ENCODE measurements at regions of chr19 and their contacts with region 1.

Region 1: DNA sequence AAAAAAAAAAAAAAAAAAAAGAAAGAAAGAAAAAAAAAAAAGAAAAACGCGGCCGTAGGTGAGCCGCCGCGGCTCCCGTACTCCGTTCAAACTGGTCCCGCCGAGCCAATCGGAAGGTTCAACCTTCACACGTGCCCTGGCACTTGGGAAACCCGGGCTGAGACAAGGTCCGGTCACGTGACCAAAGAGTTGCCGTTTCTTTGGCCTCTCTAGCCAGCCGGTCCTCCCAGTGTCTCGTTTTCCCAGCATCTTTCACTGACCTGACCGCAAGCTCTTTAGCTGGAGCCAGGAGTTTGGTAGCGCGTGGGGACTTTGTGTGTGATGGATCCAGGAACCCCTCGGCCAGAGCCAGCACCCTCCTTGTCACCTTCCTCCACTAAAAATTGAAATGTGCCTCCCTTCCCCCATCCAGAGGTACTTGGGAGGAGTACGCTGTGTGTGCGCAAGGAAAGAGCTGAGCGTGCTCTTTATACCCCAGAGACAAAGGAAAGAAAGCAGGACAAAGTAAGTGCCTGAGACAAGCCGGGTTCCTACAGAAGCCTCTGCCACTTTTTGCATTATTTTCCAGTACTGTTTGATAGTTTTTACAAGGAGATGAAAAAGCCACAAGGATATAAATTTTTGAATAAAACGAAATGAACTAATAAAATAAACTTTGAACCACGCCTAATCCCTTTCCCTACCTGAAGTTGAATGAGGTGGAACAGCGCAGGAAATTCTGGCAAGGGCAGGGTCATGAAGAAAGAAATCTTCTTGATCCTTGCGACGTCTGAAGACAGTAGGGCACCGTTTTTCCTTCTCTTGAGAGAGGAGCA is 959 bp downstream of the TNPO2 start:
- DNase-seq: peak; percentile 91
- H3K4me3 Mint-ChIP-seq: peak overlapping the region; percentile 99
- H3K27ac Mint-ChIP-seq: peak overlapping the region; percentile 98
- H3K4me1 Mint-ChIP-seq: peaks cover 48% of the 10 kb centered on the region
- H3K27me3 Mint-ChIP-seq: no peaks in the 10 kb centered on the region

Region 2: DNA sequence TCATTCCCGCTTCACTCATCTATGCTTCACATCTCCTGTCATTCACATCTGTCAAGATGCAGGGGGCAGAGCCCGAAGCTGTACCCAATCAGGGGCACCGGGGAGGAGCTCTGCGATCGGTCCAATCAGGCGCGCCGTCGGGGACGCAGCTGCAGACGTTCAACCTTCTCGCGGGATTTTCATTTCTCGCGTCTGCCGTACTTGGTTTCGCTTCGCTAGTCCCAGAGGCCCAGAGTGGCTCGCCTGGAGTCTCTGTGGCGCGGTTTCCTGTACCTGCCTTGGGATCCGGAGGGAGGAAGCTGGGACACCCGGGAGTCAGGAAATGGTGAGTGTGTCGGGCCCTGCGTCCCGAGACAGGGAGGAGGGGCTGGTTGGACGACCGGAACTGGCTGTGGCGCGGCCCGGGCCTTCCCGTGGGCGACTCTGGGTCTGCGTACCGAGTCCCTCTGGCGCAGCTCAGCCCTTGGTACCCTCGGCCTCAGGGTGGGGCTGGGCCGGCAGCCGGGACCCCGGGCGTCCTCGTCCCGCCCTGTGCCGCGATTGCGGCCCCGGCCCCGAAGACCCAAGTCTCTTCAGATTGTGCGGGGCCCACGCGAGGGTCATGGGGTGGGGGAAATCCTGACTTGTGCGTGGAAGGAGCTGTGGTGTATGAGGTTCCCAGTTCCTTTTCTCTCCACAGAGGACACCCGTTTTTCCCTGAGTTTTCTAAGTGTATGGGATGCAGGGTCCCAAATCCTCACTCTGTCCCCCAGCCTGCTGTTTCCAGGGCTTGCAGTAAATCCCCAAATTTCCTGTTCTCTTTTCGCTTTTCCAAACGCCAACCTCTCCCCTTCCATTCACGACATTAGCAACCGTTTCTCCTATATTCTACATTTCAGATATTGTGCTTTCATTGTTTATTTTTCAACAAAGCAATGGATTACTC is 559.6 kb before region 1 on chr19 and contains the start of gene ZNF136:
- intact Hi-C with region 1: no loop called
- DNase-seq: peak; percentile 90
- H3K4me3 Mint-ChIP-seq: peak within 1 kb of the TSS; percentile 94
- H3K27ac Mint-ChIP-seq: peak within 1 kb of the TSS; percentile 93
- H3K4me1 Mint-ChIP-seq: peaks cover 28% of the 10 kb centered on the region
- H3K27me3 Mint-ChIP-seq: no peaks in the 10 kb centered on the region
- total RNA-seq, gene ZNF136: 10.1 and 10.8 TPM in 2 replicates

Region 3: DNA sequence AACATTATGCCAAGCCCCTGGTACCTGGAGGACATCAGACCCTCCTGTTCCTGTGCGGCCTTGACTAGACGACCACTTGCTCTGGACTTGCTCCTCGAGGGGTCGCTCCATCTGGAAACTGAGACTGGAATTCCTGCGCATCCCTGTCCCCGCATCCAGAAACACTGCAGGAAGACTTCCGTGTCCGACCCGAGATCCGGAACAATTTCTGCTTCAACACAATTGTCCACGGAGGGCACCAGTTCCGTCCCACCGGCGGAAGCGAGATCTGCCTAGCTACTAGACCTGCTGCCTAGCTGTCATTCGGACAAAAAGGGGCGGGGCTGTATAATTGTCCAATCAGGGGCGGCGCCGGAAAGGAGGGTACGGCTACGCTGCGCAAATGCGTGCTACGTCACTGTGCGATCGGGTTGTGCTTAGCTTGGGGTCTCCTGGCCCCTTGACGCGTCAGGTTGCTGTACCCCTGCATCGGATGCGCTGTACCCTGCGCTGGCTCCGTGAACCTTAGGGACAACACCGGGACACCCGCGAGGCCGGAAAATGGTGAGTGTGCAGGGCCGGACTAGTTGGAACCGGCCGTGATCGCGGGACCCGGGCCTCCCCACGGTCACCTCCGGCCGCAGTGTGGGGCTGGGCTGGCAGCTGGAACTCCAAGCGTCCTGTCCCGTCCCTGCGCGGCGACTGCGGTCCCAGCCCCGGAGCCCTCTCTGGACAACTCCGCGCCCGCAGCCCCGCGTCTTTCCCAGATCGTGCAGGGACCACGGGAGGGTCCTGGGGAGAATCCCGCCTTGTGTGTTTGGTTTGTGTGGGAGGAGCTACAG is 112.0 kb before region 1 on chr19 and contains the starts of genes ZNF490 and ZNF791:
- intact Hi-C with region 1: loop called (anchors 5 kb)
- DNase-seq: peak; percentile 96
- H3K4me3 Mint-ChIP-seq: peak within 1 kb of the TSS; percentile 100
- H3K27ac Mint-ChIP-seq: peak within 1 kb of the TSS; percentile 99
- H3K4me1 Mint-ChIP-seq: peaks cover 22% of the 10 kb centered on the region
- H3K27me3 Mint-ChIP-seq: no peaks in the 10 kb centered on the region
- total RNA-seq, gene ZNF490: 9.2 and 9.4 TPM in 2 replicates
- total RNA-seq, gene ZNF791: 23.5 and 29.0 TPM in 2 replicates

Region 4: GRCh38 chr19:12681074-12681951 is 41.5 kb before region 1 on chr19 and contains the start of gene DHPS:
- intact Hi-C with region 1: loop called (anchors 1 kb)
- DNase-seq: peak; percentile 89
- H3K4me3 Mint-ChIP-seq: peak within 1 kb of the TSS; percentile 86
- H3K27ac Mint-ChIP-seq: peak within 1 kb of the TSS; percentile 88
- H3K4me1 Mint-ChIP-seq: peaks cover 12% of the 10 kb centered on the region
- H3K27me3 Mint-ChIP-seq: no peaks in the 10 kb centered on the region
- total RNA-seq, gene DHPS: 144 and 147 TPM in 2 replicates

Region 5: GRCh38 chr19:12696366-12697335 is 26.1 kb before region 1 on chr19 and contains the start of gene FBXW9:
- intact Hi-C with region 1: loop called (anchors 1 kb)
- DNase-seq: peak; percentile 94
- H3K4me3 Mint-ChIP-seq: peak within 1 kb of the TSS; percentile 89
- H3K27ac Mint-ChIP-seq: peak within 1 kb of the TSS; percentile 93
- H3K4me1 Mint-ChIP-seq: peaks cover 11% of the 10 kb centered on the region
- H3K27me3 Mint-ChIP-seq: no peaks in the 10 kb centered on the region
- total RNA-seq, gene FBXW9: 11.8 and 12.2 TPM in 2 replicates

Region 6: GRCh38 chr19:12777217-12778016 is 54.6 kb after region 1 on chr19:
- intact Hi-C with region 1: loop called (anchors 5 kb)
- DNase-seq: peak; percentile 78
- H3K4me3 Mint-ChIP-seq: peak overlapping the region; percentile 86
- H3K27ac Mint-ChIP-seq: peak overlapping the region; percentile 86
- H3K4me1 Mint-ChIP-seq: peaks cover 44% of the 10 kb centered on the region
- H3K27me3 Mint-ChIP-seq: no peaks in the 10 kb centered on the region

Region 7: DNA sequence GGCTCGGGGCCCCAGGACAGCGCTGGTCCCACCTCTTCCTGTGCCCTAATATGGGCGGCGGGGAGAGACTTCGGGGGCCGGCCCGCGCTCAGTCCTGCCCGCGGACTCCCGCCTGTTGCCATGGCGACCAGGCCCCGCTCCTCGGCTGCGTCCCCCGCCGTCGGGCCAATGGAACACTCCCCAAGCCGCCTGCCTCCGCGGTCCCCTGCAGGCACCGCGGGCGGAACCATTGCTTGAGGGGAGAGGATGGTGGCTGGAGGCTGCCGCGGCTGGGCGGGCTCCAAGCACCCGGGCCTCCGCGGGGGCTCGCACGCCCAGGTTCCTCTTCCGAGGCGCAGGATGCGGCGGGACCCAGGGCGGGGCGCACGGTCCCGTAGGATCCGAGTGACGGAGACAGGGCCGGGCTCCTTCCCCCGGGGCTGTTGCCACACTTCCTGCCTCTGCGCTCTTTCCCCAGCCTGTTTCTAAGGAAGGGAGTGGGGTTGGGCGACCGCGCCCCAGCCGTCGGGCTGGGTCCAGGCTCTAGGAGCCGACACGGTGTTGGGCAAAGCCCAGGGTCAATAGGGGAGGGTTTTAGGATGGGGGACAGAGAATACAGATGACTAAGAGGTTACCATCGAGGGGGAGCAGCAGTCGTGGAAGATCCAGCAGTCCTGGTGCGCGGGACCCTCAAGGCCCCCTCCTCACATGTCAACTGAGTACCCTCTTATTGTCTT is 67.3 kb after region 1 on chr19:
- intact Hi-C with region 1: loop called (anchors 1 kb)
- DNase-seq: peak; percentile 94
- H3K4me3 Mint-ChIP-seq: peak overlapping the region; percentile 97
- H3K27ac Mint-ChIP-seq: peak overlapping the region; percentile 91
- H3K4me1 Mint-ChIP-seq: peaks cover 30% of the 10 kb centered on the region
- H3K27me3 Mint-ChIP-seq: no peaks in the 10 kb centered on the region

Region 8: GRCh38 chr19:12838182-12838885 is 115.6 kb after region 1 on chr19 and contains the start of gene MAST1:
- intact Hi-C with region 1: no loop called
- DNase-seq: peak; percentile 47
- H3K4me3 Mint-ChIP-seq: peak within 1 kb of the TSS; percentile 68
- H3K27ac Mint-ChIP-seq: no peak within 1 kb of the TSS
- H3K4me1 Mint-ChIP-seq: peaks cover 30% of the 10 kb centered on the region
- H3K27me3 Mint-ChIP-seq: peaks cover 59% of the 10 kb centered on the region
- total RNA-seq, gene MAST1: 1.4 and 1.7 TPM in 2 replicates

Region 9: DNA sequence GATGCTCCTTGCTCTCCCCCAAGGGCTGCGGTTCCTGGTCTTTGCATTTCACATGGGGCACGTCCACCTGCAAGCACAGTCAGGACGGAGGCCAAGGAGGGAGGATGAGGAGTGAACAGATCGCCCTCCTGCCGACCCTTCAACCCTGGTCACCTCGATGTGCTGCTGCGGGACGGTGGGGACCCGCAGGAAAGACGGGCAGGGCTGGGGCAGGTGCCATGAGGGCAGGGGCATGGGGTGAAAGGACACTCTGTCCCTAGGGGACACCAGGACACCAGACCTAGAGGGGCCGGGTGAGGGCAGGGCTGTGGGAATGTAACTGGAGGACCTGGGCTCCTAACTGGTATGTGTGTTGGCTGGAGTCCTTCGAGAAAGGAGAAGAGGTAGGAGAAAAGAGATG is 195.5 kb after region 1 on chr19:
- intact Hi-C with region 1: no loop called
- DNase-seq: no peak
- H3K4me3 Mint-ChIP-seq: peak overlapping the region; percentile 75
- H3K27ac Mint-ChIP-seq: peak overlapping the region; percentile 85
- H3K4me1 Mint-ChIP-seq: peaks cover 31% of the 10 kb centered on the region
- H3K27me3 Mint-ChIP-seq: no peaks in the 10 kb centered on the region

Region 10: DNA sequence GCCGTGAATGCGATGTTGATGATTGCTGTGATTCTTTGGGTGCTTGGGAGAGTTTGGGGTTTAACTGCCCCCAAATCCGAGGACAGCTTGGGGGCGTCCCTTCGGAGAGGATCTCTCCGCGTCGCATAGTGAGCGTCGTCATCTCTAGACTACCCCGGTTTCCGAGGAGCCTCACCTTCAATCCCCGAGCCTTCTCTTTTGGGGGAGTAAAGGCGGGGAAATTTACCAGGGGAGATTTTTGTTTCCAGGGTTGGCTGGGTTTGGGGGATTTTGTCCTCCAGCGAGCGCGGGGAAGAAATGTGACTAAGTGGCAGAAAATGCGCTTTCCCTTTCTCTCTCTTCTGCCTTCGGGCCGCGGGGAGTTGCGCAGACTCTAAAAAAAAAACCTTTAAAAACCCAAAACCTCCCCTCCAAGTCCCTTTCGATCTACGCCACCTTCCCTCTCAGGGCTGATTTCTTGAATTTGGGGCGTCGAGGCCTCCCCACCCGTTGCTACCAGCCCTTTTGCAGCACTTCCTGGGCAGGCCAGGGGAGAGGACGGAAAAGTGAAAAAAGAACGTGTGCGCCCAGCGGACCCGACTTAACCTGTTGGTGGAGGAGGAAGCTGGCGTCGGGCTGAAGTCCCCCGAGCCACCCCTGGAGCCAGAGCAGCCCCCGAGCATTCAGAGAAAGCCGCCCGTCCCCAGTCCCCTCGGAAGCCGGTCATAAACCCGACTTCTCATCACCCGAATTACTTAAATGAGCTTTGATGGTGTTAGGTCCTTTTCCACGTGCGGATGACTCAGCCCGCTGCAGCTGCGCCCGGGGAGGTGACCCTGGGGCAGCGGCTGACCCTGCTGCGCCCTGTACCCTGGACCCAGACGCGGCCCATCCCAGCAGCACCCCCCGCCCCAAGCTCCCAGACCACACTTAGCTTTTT is 290.2 kb after region 1 on chr19:
- intact Hi-C with region 1: no loop called
- DNase-seq: no peak
- H3K4me3 Mint-ChIP-seq: peak overlapping the region; percentile 79
- H3K27ac Mint-ChIP-seq: peak overlapping the region; percentile 85
- H3K4me1 Mint-ChIP-seq: peaks cover 23% of the 10 kb centered on the region
- H3K27me3 Mint-ChIP-seq: peaks cover 72% of the 10 kb centered on the region

Measured in activated T-helper 1 cell treated with anti-CD3 and anti-CD28 coated beads, Interleukin-12 subunit alpha, Interleukin-12 subunit beta, Interleukin-2, Interleukin-4 antibody, amounts not matched to agents 30 ng/mL and 10 ng/mL and 1 ng/mL, durations not matched to agents 14 hours and 24 hours and 36 hours (primary cell).